Activated T-helper 2 cell treated with anti-CD3 and anti-CD28 coated beads, Interferon-gamma antibody, Interleukin-2, Interleukin-4, amounts not matched to agents 10 μg/mL and 5 μg/mL and 100 μg/mL, durations not matched to agents 14 hours and 24 hours and 36 hours (primary cell): ENCODE measurements at regions of chr1 and their contacts with region 1.

Region 1: DNA sequence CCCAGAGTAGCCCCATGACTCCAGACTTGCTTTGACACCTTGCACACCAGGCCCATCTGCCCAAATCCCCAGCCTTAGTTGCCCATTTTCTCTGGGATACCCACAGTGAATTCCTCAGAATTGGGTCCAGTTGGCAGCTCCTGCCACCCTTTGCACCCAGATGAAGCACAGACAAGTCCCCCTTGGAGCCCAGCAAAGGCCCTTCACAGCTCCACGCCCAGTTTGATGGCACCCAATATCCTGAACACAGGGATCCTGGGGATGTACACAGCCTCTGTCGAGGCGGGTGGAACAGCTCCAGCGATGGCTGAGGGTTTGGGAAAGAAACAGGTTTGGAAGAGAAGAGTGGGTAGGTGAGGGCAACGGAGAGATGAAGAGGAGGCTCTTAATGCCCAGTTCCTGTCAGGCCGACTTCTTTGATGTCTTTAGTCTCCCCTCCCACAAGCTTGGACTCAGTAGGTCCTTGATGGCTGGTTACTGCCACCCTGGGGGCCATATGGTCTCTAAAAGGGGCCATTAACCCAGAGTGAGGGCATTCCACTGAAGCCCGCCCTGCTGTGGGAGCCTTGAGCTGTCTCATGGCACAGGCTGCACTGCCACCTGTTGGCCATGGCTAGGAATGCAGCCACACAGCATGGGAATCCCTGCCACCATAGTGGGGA is 21.7 kb downstream of the TMEM53 start:
- DNase-seq: peak; percentile 61
- H3K4me3 Mint-ChIP-seq: no peak overlapping the region
- H3K27ac Mint-ChIP-seq: peak overlapping the region; percentile 24
- H3K4me1 Mint-ChIP-seq: no peaks in the 10 kb centered on the region
- H3K27me3 Mint-ChIP-seq: no peaks in the 10 kb centered on the region

Region 2: GRCh38 chr1:43736819-43737218 is 915.8 kb before region 1 on chr1:
- intact Hi-C with region 1: no loop called
- DNase-seq: no peak
- H3K4me3 Mint-ChIP-seq: no peak overlapping the region
- H3K27ac Mint-ChIP-seq: no peak overlapping the region
- H3K4me1 Mint-ChIP-seq: no peaks in the 10 kb centered on the region
- H3K27me3 Mint-ChIP-seq: no peaks in the 10 kb centered on the region

Region 3: DNA sequence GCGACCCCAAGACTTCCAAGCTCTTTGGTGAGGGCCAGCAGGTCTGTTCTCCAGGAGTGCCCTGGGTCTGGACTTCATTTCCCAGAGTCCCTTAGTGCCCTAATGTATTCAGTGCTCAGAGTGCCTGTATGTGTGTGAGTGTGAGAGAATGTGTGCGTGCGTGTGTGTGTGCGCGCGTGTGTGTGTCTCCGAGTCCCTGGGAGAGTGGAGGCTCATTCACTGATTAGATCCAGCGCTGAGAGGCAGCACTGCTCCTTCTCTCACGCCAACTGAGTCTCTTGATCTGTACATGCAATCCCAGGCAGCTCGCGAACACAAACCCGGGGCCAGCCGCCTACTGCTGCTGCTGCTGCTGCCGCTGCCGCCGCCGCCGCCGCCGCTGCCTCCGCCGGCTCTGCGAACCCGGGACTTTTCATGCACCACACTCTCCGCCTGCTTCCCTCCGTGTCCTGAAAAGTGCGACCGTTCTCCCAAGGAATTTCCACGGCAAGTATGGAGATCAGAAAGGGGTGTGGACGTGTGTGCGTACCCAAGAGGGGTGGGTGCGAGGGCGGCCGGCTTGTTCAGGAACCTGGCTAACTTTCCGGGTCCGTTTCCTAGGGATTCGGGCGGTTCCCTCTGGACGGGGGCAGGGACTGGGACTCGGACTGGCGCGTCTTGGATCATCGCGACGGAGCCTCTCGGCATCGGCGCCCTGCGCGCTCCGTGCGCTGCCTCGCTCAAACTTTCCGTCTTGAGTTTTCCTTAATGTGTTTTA is 247.4 kb before region 1 on chr1 and contains the start of gene RNF220:
- intact Hi-C with region 1: no loop called
- DNase-seq: no peak
- H3K4me3 Mint-ChIP-seq: peak within 1 kb of the TSS; percentile 82
- H3K27ac Mint-ChIP-seq: no peak within 1 kb of the TSS
- H3K4me1 Mint-ChIP-seq: peaks cover 24% of the 10 kb centered on the region
- H3K27me3 Mint-ChIP-seq: peaks cover 54% of the 10 kb centered on the region
- total RNA-seq, gene RNF220: 88.0 and 89.5 TPM in 2 replicates

Region 4: GRCh38 chr1:44571712-44572571 is 80.6 kb before region 1 on chr1:
- intact Hi-C with region 1: loop called (anchors 2 kb)
- DNase-seq: no peak
- H3K4me3 Mint-ChIP-seq: no peak overlapping the region
- H3K27ac Mint-ChIP-seq: no peak overlapping the region
- H3K4me1 Mint-ChIP-seq: no peaks in the 10 kb centered on the region
- H3K27me3 Mint-ChIP-seq: peaks cover 10% of the 10 kb centered on the region

Region 5: GRCh38 chr1:44674113-44675000 is 21.8 kb after region 1 on chr1 and contains the starts of genes ARMH1 and TMEM53:
- intact Hi-C with region 1: no loop called
- DNase-seq: peak; percentile 98
- H3K4me3 Mint-ChIP-seq: peak within 1 kb of the TSS; percentile 80
- H3K27ac Mint-ChIP-seq: peak within 1 kb of the TSS; percentile 86
- H3K4me1 Mint-ChIP-seq: peaks cover 26% of the 10 kb centered on the region
- H3K27me3 Mint-ChIP-seq: no peaks in the 10 kb centered on the region
- total RNA-seq, gene ARMH1: 139 and 157 TPM in 2 replicates
- total RNA-seq, gene TMEM53: 6.3 and 6.7 TPM in 2 replicates